ENCODE measurements at regions of chr1 and their contacts with region 1.

Region 1: DNA sequence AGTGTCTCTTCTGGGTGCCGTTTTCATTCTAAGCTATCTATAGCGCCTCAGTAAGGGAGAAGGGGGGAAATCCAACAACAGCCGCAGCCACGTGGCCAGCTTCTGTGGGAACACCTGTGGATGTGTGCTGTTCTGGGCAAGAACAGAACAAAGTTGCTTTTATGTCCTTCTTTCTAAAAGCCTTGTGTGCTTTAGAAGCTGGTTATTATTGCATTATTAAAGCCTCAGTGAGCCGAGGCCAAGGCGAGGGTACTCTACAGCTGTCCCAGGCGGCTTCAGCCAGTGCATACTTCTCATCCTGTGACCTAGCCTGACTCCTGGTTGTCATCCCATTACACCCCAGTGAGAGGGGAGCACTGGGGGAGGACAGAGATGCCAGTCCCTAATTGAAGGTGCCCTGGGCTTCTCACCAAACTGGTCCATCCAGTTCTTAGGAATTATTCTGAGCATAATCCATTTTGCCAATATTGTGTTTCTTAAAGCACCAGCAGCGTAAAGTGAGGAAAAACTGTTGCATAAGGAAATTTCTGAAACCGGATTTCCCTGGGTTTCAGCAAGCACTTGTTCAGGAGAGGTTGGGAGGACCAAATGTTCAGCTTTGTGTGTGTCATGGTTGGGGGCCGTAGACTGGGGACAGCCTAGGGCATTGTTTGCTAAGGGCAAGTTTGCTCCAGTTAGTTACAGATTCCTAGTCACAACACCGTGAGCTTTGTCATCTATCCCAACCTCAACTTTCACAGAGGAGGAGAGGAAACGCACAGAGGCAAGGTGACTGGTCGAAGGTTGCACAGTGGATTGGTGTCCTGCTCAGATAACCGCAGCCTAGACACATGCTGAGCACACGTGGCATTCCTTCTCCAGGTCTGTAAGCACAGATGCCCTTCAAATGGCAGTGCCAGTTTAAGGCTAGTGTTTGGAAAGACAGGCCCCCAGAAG is 61.0 kb upstream of the ATP1A1 start:
- DNase-seq: peak; percentile 42
- H3K4me3 ChIP-seq: no peak overlapping the region
- H3K27ac ChIP-seq: peak overlapping the region; percentile 53 to 63 (median 57)
- H3K4me1 ChIP-seq: peaks cover 0 to 17% (median 8%) of the 10 kb centered on the region in 4 donors
- H3K27me3 ChIP-seq: no peaks in the 10 kb centered on the region
- CTCF ChIP-seq: no peak
- EP300 ChIP-seq: no peak
- POLR2A ChIP-seq: no peak

Region 2: GRCh38 chr1:114884456-114884990 is 1427.5 kb before region 1 on chr1:
- in situ Hi-C with region 1: no loop called
- intact Hi-C with region 1: loop called (anchors 10 kb)
- DNase-seq: no peak
- H3K4me3 ChIP-seq: no peak overlapping the region
- H3K27ac ChIP-seq: no peak overlapping the region
- H3K4me1 ChIP-seq: no peaks in the 10 kb centered on the region
- H3K27me3 ChIP-seq: no peaks in the 10 kb centered on the region
- CTCF ChIP-seq: no peak
- EP300 ChIP-seq: no peak
- POLR2A ChIP-seq: no peak

Region 3: GRCh38 chr1:116092752-116093482 is 219.1 kb before region 1 on chr1:
- in situ Hi-C with region 1: no loop called
- intact Hi-C with region 1: no loop called
- DNase-seq: no peak
- H3K4me3 ChIP-seq: no peak overlapping the region
- H3K27ac ChIP-seq: peak overlapping the region; percentile 22 to 55 (median 43)
- H3K4me1 ChIP-seq: peaks cover 0 to 11% (median 6%) of the 10 kb centered on the region in 4 donors
- H3K27me3 ChIP-seq: no peaks in the 10 kb centered on the region
- CTCF ChIP-seq: no peak
- EP300 ChIP-seq: no peak
- POLR2A ChIP-seq: no peak

Region 4: DNA sequence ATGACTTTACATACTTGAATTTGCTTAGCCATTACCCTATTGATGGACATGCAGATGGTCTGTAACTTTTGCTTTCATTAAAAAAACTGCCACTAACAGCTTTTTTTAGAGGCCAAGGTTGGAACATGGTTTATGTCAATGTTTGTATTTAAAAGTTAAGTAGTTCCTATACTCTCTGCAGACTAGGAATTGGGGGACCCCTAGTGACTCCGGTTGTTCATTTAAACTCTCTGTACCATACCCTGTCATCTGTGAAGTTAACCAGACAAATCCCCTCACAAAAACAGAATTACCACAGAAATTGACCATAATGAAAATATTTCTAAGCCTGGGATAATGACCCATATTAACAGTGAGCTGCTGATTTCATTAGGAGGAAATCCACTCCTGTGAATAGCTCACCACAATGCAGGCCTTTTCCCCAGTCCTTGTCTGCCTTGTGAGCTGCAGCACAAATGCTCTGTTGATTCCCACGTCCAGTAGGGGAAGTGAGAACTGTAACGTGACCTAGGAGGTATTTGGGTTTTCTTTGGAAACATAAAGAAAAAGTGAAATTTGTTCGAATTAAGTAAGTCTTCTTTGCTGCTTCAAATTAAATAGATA is 659.3 kb after region 1 on chr1:
- in situ Hi-C with region 1: no loop called
- intact Hi-C with region 1: no loop called
- DNase-seq: no peak
- H3K4me3 ChIP-seq: no peak overlapping the region
- H3K27ac ChIP-seq: peak overlapping the region; percentile 8 to 70 (median 43)
- H3K4me1 ChIP-seq: peaks cover 0 to 16% (median 9%) of the 10 kb centered on the region in 4 donors
- H3K27me3 ChIP-seq: no peaks in the 10 kb centered on the region
- CTCF ChIP-seq: no peak
- EP300 ChIP-seq: no peak
- POLR2A ChIP-seq: no peak

Measured in transverse colon (tissue), 4 donors.